K562 (cell line): ENCODE measurements at regions of chr10 and their contacts with region 1.

Region 1: GRCh38 chr10:113939212-113939860 is 84.9 kb downstream of the NHLRC2 start:
- DNase-seq: no peak
- ATAC-seq: peak; percentile 31; the same call in 1 of the 3 replicates
- H3K4me3 ChIP-seq: no peak overlapping the region
- H3K27ac ChIP-seq: no peak overlapping the region
- H3K4me1 ChIP-seq: no peaks in the 10 kb centered on the region
- H3K27me3 ChIP-seq: peaks cover 2 to 10% of the 10 kb centered on the region in 2 experiments; a peak in 3 of 5 replicates
- CTCF ChIP-seq: peak; percentile 16 to 29 (median 25); a peak in 3 of 6 replicates
- EP300 ChIP-seq: no peak
- POLR2A ChIP-seq: no peak
- RAD21 ChIP-seq: peak in 1 of 2 experiments; percentile 49; a peak in 2 of 4 replicates

Region 2: DNA sequence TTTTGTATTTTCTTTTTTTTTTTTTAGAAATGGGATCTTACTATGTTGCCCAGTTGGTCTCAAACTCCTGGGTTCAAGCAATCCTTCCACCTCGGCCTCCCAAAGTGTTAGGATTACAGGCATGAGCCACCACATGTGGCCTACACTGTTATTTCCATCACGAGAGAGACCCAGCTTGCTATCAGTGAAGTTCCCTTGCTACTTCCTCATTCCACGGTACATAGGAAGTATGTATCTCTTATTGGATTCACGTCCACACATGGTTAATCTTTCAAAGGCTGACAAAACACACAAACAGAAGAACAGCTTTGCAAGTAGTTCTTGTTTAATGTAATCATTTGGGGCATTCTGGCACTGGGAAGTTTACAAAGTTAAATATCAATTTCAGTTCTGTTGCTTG is 136.3 kb before region 1 on chr10:
- CTCF ChIA-PET with region 1: no interaction called
- POLR2A ChIA-PET with region 1: no interaction called
- in situ Hi-C with region 1: no loop called
- intact Hi-C with region 1: loop called (anchors 1 kb)
- DNase-seq: no peak
- ATAC-seq: peak; percentile 57; the same call in 2 of the 3 replicates
- H3K4me3 ChIP-seq: no peak overlapping the region
- H3K27ac ChIP-seq: no peak overlapping the region
- H3K4me1 ChIP-seq: no peaks in the 10 kb centered on the region; a peak in 1 of 5 replicates
- H3K27me3 ChIP-seq: no peaks in the 10 kb centered on the region; a peak in 1 of 5 replicates
- CTCF ChIP-seq: no peak
- EP300 ChIP-seq: no peak
- POLR2A ChIP-seq: no peak
- RAD21 ChIP-seq: no peak

Region 3: DNA sequence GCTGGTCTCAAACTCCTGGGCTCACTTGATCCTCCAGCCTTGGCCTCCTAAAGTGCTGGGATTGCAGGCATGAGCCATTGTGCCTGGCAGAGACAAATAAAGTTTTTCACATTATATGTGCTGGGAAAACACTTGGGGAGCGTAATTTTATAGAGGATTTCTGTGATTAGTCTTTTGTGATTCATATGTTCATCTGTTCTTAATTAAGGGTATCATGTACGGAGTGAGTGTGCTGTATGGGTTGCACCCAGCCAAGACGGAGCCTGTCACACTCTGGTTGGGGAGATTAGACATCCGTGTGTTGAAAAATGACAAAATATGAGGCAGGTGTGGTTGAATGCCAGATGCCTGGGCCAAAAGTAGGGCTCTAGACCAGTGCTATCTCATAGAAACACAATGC is 114.6 kb after region 1 on chr10:
- CTCF ChIA-PET with region 1: no interaction called
- POLR2A ChIA-PET with region 1: no interaction called
- in situ Hi-C with region 1: no loop called
- intact Hi-C with region 1: no loop called
- DNase-seq: no peak
- ATAC-seq: no peak
- H3K4me3 ChIP-seq: no peak overlapping the region
- H3K27ac ChIP-seq: no peak overlapping the region
- H3K4me1 ChIP-seq: no peaks in the 10 kb centered on the region
- H3K27me3 ChIP-seq: peaks cover 0 to 4% of the 10 kb centered on the region in 2 experiments; a peak in 3 of 5 replicates
- CTCF ChIP-seq: no peak
- EP300 ChIP-seq: no peak
- POLR2A ChIP-seq: no peak
- RAD21 ChIP-seq: no peak